ENCODE measurements at regions of chr12 and their contacts with region 1.

Region 1: DNA sequence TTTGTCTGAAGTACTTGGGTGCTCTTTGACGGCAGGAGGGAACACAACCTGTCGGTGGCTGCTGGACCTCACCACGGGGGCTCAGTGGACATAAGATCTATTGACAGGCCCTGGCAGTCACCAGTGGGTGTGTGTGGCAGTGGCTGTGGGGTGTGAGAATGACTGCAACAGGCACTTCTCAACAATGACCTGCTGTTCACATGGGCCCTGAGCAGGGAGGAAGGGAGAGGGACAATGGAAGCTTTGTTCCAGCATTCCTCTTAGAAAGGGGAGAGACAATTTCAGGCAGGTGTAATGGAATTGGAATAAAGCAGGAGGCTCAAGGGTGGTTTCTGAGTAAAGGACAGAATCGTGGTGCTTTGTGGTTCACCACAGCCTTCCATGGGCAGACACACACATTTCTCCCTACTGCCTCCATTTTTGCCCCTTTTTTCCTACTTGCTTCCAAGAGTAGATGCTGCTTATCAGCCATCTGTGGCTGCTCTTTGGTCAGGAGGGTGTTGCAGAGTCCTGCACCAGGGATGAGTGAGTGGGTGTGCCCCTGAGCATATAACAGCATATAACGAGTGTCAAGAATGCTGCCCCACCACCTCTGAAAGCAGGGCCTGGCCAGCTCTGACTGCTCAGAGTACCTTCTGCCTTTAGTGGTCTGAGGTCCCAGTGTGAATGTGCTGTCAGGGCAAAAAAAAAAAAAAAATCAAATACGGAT is 267.7 kb downstream of the RASSF9 start:
- DNase-seq: no peak
- ATAC-seq: no peak
- H3K4me3 ChIP-seq: no peak overlapping the region
- H3K4me3 Mint-ChIP-seq: no peak overlapping the region
- H3K27ac ChIP-seq: no peak overlapping the region
- H3K27ac Mint-ChIP-seq: no peak overlapping the region
- H3K4me1 ChIP-seq: no peaks in the 10 kb centered on the region
- H3K4me1 Mint-ChIP-seq: no peaks in the 10 kb centered on the region
- H3K27me3 ChIP-seq: no peaks in the 10 kb centered on the region
- H3K27me3 Mint-ChIP-seq: no peaks in the 10 kb centered on the region

Region 2: DNA sequence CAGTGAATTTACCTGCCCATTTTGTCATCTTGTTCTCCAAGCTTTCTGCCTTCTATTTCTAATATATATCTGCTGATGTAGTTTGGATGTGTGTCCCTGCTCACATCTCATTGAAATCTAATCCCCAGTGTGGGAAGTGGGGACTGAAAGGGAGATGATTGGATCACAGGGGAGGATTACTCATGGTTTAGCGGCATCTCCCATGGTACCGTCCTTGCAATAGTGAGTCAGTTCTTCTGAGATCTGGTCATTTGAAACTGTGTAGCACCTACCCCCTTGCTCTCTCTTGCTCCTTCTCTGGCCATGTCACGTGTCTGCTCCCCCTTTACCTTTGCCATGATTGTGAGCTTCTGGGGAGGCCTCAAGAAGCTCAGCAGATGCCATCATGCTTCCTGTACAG is 314.7 kb before region 1 on chr12:
- CTCF ChIA-PET with region 1: no interaction called
- POLR2A ChIA-PET with region 1: no interaction called
- intact Hi-C with region 1: no loop called
- DNase-seq: no peak
- ATAC-seq: no peak
- H3K4me3 ChIP-seq: no peak overlapping the region
- H3K4me3 Mint-ChIP-seq: no peak overlapping the region
- H3K27ac ChIP-seq: no peak overlapping the region
- H3K27ac Mint-ChIP-seq: no peak overlapping the region
- H3K4me1 ChIP-seq: no peaks in the 10 kb centered on the region
- H3K4me1 Mint-ChIP-seq: no peaks in the 10 kb centered on the region
- H3K27me3 ChIP-seq: no peaks in the 10 kb centered on the region
- H3K27me3 Mint-ChIP-seq: no peaks in the 10 kb centered on the region

Region 3: DNA sequence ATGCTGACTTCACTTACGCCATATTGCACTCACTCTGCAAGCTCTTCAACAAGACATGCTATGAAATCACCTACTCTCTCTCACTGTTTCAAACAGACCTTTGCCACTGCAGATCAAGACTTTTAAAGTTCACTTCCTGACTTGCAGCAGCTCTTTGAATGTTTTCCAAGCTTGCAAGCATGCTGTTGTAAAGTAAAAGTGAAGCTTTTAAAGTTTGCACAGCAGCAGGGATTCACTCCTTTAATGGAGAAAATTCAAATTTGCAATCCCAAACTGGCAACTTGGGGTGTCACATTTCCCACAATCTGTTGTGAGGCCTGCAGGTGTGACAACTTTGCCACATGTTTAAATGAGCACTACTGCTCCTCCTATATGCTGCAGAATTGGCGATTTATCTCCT is 17.6 kb before region 1 on chr12:
- CTCF ChIA-PET with region 1: no interaction called
- POLR2A ChIA-PET with region 1: interaction called, 10 read pairs
- intact Hi-C with region 1: no loop called
- DNase-seq: no peak
- ATAC-seq: no peak
- H3K4me3 ChIP-seq: no peak overlapping the region
- H3K4me3 Mint-ChIP-seq: no peak overlapping the region
- H3K27ac ChIP-seq: no peak overlapping the region
- H3K27ac Mint-ChIP-seq: no peak overlapping the region
- H3K4me1 ChIP-seq: no peaks in the 10 kb centered on the region
- H3K4me1 Mint-ChIP-seq: no peaks in the 10 kb centered on the region
- H3K27me3 ChIP-seq: no peaks in the 10 kb centered on the region
- H3K27me3 Mint-ChIP-seq: no peaks in the 10 kb centered on the region

Region 4: GRCh38 chr12:85603556-85603955 is 35.0 kb after region 1 on chr12:
- CTCF ChIA-PET with region 1: no interaction called
- POLR2A ChIA-PET with region 1: no interaction called
- intact Hi-C with region 1: no loop called
- DNase-seq: no peak
- ATAC-seq: no peak
- H3K4me3 ChIP-seq: no peak overlapping the region
- H3K4me3 Mint-ChIP-seq: no peak overlapping the region
- H3K27ac ChIP-seq: no peak overlapping the region
- H3K27ac Mint-ChIP-seq: no peak overlapping the region
- H3K4me1 ChIP-seq: no peaks in the 10 kb centered on the region
- H3K4me1 Mint-ChIP-seq: no peaks in the 10 kb centered on the region
- H3K27me3 ChIP-seq: no peaks in the 10 kb centered on the region
- H3K27me3 Mint-ChIP-seq: no peaks in the 10 kb centered on the region

Measured in naive thymus-derived CD4-positive, alpha-beta T cell (primary cell).